AG04450 (cell line): ENCODE measurements at regions of chr2 and their contacts with region 1.

Region 1: GRCh38 chr2:209334198-209335017 is 89.4 kb upstream of the MAP2 start:
- DNase-seq: peak; percentile 13
- H3K4me3 ChIP-seq: no peak overlapping the region
- H3K27ac ChIP-seq: no peak overlapping the region
- H3K27me3 ChIP-seq: no peaks in the 10 kb centered on the region
- CTCF ChIP-seq: peak; percentile 93

Region 2: DNA sequence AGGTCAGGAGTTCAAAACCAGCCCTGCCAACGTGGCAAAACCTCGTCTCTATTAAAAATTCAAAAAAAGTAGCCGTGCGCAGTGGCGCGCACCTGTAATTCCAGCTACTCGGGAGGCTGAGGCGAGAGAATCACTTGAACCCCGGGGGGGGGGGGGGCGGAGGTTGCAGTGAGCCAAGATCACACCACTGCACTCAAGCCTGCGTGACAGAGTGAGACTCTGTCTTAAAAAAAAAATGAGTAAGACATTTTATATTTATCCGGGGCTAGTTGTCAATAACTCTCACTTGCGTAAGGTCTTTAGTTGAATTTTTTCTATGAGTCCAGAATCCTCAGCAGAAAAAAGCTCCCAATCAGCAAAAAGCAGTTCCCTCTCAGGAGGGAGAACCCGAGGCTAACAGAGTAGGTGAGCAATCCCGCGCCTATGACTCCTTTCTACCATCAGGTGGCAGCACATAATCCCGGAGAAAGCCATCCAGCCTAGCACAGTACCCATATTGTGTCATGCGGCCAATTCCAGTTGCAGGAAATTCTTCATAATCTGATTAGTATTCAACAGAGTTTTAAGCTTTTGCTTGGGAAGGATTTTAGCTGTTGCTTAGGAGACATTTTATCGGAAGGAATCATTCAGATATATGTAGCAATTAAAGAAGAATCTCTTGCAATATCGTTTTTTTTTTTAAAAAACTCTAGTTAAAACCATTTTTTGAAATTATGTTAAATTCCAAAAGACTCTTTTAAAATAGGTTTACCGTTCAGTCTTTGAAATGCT is 1159.2 kb before region 1 on chr2:
- CTCF ChIA-PET with region 1: interaction called, 11 read pairs
- POLR2A ChIA-PET with region 1: no interaction called
- DNase-seq: peak; percentile 38
- H3K4me3 ChIP-seq: no peak overlapping the region
- H3K27ac ChIP-seq: no peak overlapping the region
- H3K27me3 ChIP-seq: no peaks in the 10 kb centered on the region
- CTCF ChIP-seq: peak; percentile 96

Region 3: GRCh38 chr2:208798710-208799109 is 535.7 kb before region 1 on chr2:
- CTCF ChIA-PET with region 1: no interaction called
- POLR2A ChIA-PET with region 1: no interaction called
- DNase-seq: no peak
- H3K4me3 ChIP-seq: no peak overlapping the region
- H3K27ac ChIP-seq: no peak overlapping the region
- H3K27me3 ChIP-seq: no peaks in the 10 kb centered on the region
- CTCF ChIP-seq: no peak

Region 4: GRCh38 chr2:209322041-209322440 is 12.4 kb before region 1 on chr2:
- CTCF ChIA-PET with region 1: interaction called, 29 read pairs
- POLR2A ChIA-PET with region 1: no interaction called
- DNase-seq: no peak
- H3K4me3 ChIP-seq: no peak overlapping the region
- H3K27ac ChIP-seq: no peak overlapping the region
- H3K27me3 ChIP-seq: no peaks in the 10 kb centered on the region
- CTCF ChIP-seq: no peak

Region 5: GRCh38 chr2:209416913-209417312 is 82.5 kb after region 1 on chr2:
- CTCF ChIA-PET with region 1: interaction called, 59 read pairs
- POLR2A ChIA-PET with region 1: no interaction called
- DNase-seq: no peak
- H3K4me3 ChIP-seq: no peak overlapping the region
- H3K27ac ChIP-seq: no peak overlapping the region
- H3K27me3 ChIP-seq: no peaks in the 10 kb centered on the region
- CTCF ChIP-seq: no peak

Region 6: GRCh38 chr2:209556354-209556961 is 222.1 kb after region 1 on chr2:
- CTCF ChIA-PET with region 1: interaction called, 103 read pairs
- POLR2A ChIA-PET with region 1: no interaction called
- DNase-seq: peak; percentile 8
- H3K4me3 ChIP-seq: no peak overlapping the region
- H3K27ac ChIP-seq: no peak overlapping the region
- H3K27me3 ChIP-seq: no peaks in the 10 kb centered on the region
- CTCF ChIP-seq: peak; percentile 75

Region 7: GRCh38 chr2:209960676-209961630 is 626.5 kb after region 1 on chr2:
- CTCF ChIA-PET with region 1: interaction called, 21 read pairs
- POLR2A ChIA-PET with region 1: no interaction called
- DNase-seq: no peak
- H3K4me3 ChIP-seq: no peak overlapping the region
- H3K27ac ChIP-seq: no peak overlapping the region
- H3K27me3 ChIP-seq: no peaks in the 10 kb centered on the region
- CTCF ChIP-seq: peak; percentile 70